CD8-positive, alpha-beta T cell (primary cell): ENCODE measurements at regions of chr7 and their contacts with region 1.

Region 1: GRCh38 chr7:98878365-98879165 is at the start of gene TRRAP:
- DNase-seq: peak; percentile 56 to 87 (median 73)
- ATAC-seq: peak; percentile 63
- H3K4me3 ChIP-seq: peak within 1 kb of the TSS; percentile 82 to 92
- H3K4me3 Mint-ChIP-seq: peak within 1 kb of the TSS; percentile 98
- H3K27ac ChIP-seq: peak within 1 kb of the TSS; percentile 77 to 82
- H3K27ac Mint-ChIP-seq: peak within 1 kb of the TSS; percentile 96
- H3K4me1 ChIP-seq: peaks cover 16% of the 10 kb centered on the region
- H3K4me1 Mint-ChIP-seq: peaks cover 24% of the 10 kb centered on the region
- H3K27me3 ChIP-seq: no peaks in the 10 kb centered on the region
- H3K27me3 Mint-ChIP-seq: peaks cover 2% of the 10 kb centered on the region
- CTCF ChIP-seq: peak; percentile 94
- total RNA-seq, gene TRRAP: 39.8 to 43.0 TPM

Region 2: GRCh38 chr7:97971990-97972943 is 906.3 kb before region 1 on chr7:
- CTCF ChIA-PET with region 1: no interaction called
- POLR2A ChIA-PET with region 1: no interaction called
- intact Hi-C with region 1: loop called in 1 of 2 experiments (anchors 5 kb)
- DNase-seq: peak; percentile 65 to 90 (median 84)
- ATAC-seq: peak; percentile 94
- H3K4me3 ChIP-seq: peak overlapping the region; percentile 81 to 84
- H3K4me3 Mint-ChIP-seq: peak overlapping the region; percentile 89
- H3K27ac ChIP-seq: peak overlapping the region; percentile 61 to 72
- H3K27ac Mint-ChIP-seq: peak overlapping the region; percentile 93
- H3K4me1 ChIP-seq: peaks cover 10% of the 10 kb centered on the region
- H3K4me1 Mint-ChIP-seq: peaks cover 22% of the 10 kb centered on the region
- H3K27me3 ChIP-seq: no peaks in the 10 kb centered on the region
- H3K27me3 Mint-ChIP-seq: no peaks in the 10 kb centered on the region
- CTCF ChIP-seq: peak; percentile 32

Region 3: DNA sequence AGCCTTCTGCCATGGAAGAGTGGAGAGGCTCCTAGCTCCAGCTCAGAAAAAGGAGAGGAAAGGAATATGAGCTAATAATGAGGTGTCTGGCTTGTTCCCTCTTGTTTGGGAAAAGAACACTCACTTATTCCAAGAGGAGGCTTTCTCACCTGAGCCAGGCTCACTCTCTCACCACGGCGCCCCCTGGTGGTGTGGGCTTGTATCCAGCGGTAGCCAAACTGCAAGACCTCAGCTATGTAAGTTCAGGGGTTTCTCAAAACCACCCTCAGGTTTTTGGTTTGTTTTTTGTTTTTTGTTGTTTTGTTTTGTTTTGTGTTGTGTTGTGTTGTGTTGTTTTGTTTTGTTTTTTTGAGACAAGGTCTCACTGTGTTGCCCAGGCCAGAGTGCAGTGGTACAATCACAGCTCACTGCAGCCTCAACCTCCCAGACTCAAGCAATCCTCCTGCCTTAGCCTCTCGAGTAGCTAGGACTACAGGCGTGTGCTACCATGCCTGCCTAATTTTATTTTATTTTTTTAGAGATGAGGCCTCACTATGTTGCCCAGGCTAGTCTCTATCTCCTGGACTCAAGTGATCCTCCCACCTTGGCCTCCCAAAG is 132.7 kb before region 1 on chr7:
- CTCF ChIA-PET with region 1: no interaction called
- POLR2A ChIA-PET with region 1: no interaction called
- intact Hi-C with region 1: no loop called
- DNase-seq: peak; percentile 40 to 80 (median 67)
- ATAC-seq: no peak
- H3K4me3 ChIP-seq: no peak overlapping the region
- H3K4me3 Mint-ChIP-seq: no peak overlapping the region
- H3K27ac ChIP-seq: no peak overlapping the region
- H3K27ac Mint-ChIP-seq: no peak overlapping the region
- H3K4me1 ChIP-seq: no peaks in the 10 kb centered on the region
- H3K4me1 Mint-ChIP-seq: no peaks in the 10 kb centered on the region
- H3K27me3 ChIP-seq: no peaks in the 10 kb centered on the region
- H3K27me3 Mint-ChIP-seq: peaks cover 11% of the 10 kb centered on the region
- CTCF ChIP-seq: peak; percentile 70

Region 4: GRCh38 chr7:99325545-99326407 is 447.2 kb after region 1 on chr7 and contains the start of gene ARPC1A:
- CTCF ChIA-PET with region 1: no interaction called
- POLR2A ChIA-PET with region 1: no interaction called
- intact Hi-C with region 1: loop called in 1 of 2 experiments (anchors 10 kb)
- DNase-seq: peak; percentile 88 to 96 (median 92)
- ATAC-seq: peak; percentile 92
- H3K4me3 ChIP-seq: peak within 1 kb of the TSS; percentile 97 to 100
- H3K4me3 Mint-ChIP-seq: peak within 1 kb of the TSS; percentile 89
- H3K27ac ChIP-seq: peak within 1 kb of the TSS; percentile 79 to 87
- H3K27ac Mint-ChIP-seq: peak within 1 kb of the TSS; percentile 94
- H3K4me1 ChIP-seq: peaks cover 45% of the 10 kb centered on the region
- H3K4me1 Mint-ChIP-seq: peaks cover 43% of the 10 kb centered on the region
- H3K27me3 ChIP-seq: no peaks in the 10 kb centered on the region
- H3K27me3 Mint-ChIP-seq: no peaks in the 10 kb centered on the region
- CTCF ChIP-seq: no peak
- total RNA-seq, gene ARPC1A: 33.1 to 38.2 TPM